ENCODE measurements at regions of chr11 and their contacts with region 1.

Region 1: GRCh38 chr11:67656278-67656922 is 5.9 kb upstream of the ACY3 start:
- DNase-seq: peak; percentile 83
- H3K4me3 ChIP-seq: no peak overlapping the region
- H3K27ac ChIP-seq: peak overlapping the region; percentile 71
- H3K4me1 ChIP-seq: peaks cover 29% of the 10 kb centered on the region
- H3K27me3 ChIP-seq: no peaks in the 10 kb centered on the region
- CTCF ChIP-seq: no peak

Region 2: GRCh38 chr11:67572747-67573419 is 83.5 kb before region 1 on chr11:
- CTCF ChIA-PET with region 1: no interaction called
- dilution Hi-C with region 1: no loop called
- in situ Hi-C with region 1: no loop called
- intact Hi-C with region 1: loop called (anchors 1 kb)
- DNase-seq: peak; percentile 50
- H3K4me3 ChIP-seq: no peak overlapping the region
- H3K27ac ChIP-seq: no peak overlapping the region
- H3K4me1 ChIP-seq: no peaks in the 10 kb centered on the region
- H3K27me3 ChIP-seq: no peaks in the 10 kb centered on the region
- CTCF ChIP-seq: peak; percentile 58 to 84

Region 3: GRCh38 chr11:67613960-67614715 is 42.3 kb before region 1 on chr11:
- CTCF ChIA-PET with region 1: interaction called, 3 read pairs
- dilution Hi-C with region 1: no loop called
- in situ Hi-C with region 1: no loop called
- intact Hi-C with region 1: loop called (anchors 1 kb)
- DNase-seq: peak; percentile 57
- H3K4me3 ChIP-seq: peak overlapping the region in 2 of 3 experiments; percentile 20 to 48
- H3K27ac ChIP-seq: peak overlapping the region; percentile 11
- H3K4me1 ChIP-seq: peaks cover 17% of the 10 kb centered on the region
- H3K27me3 ChIP-seq: no peaks in the 10 kb centered on the region
- CTCF ChIP-seq: peak in 1 of 2 donors; percentile 79

Region 4: DNA sequence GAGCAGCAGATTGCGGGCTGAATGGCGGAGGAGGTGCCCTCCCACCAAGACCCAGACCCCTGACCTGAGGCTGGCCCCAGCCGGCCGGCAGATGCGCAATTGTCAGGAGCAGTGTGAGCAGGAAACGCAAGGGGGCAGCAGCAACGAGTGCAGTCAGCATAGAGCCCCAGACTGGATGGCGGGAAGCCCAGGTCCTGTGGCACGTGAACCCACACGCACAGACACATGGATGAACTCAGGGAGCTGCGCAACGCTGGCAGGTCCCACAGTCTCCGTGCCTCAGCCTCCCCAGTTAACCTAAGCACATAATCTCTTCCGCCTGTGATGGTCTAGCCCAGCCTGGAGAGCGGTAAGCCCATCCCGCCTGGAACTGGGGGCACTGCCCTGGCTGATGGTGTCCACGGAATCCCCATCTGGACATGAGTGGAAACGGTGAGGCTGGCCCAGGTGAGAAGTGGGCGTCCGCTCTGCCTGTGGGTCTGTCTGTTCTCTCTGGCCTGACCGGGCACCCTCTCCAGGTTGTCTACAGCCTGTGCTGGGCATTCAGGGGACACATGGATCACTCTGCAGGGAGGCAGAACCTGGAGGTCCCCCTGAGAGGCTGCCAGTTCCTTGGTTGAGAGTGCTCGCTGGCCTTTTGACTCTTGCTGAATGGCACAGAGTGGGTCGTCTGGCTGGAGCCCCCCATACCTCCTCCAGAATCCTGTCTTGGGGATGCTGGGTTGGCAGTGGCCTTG is 16.2 kb before region 1 on chr11:
- CTCF ChIA-PET with region 1: interaction called, 8 read pairs
- dilution Hi-C with region 1: no loop called
- in situ Hi-C with region 1: no loop called
- intact Hi-C with region 1: loop called (anchors 1 kb)
- DNase-seq: no peak
- H3K4me3 ChIP-seq: no peak overlapping the region
- H3K27ac ChIP-seq: no peak overlapping the region
- H3K4me1 ChIP-seq: no peaks in the 10 kb centered on the region
- H3K27me3 ChIP-seq: no peaks in the 10 kb centered on the region
- CTCF ChIP-seq: peak; percentile 62 to 83